GM12878 (cell line): ENCODE measurements at regions of chr16 and their contacts with region 1.

Region 1: GRCh38 chr16:87778830-87779579 is 13.2 kb upstream of the KLHDC4 start:
- DNase-seq: peak; percentile 80
- ATAC-seq: peak; percentile 77
- H3K4me3 ChIP-seq: no peak overlapping the region; the same call in 1 of the 2 replicates
- H3K27ac ChIP-seq: peak overlapping the region; percentile 72
- H3K4me1 ChIP-seq: peaks cover 56% of the 10 kb centered on the region
- H3K27me3 ChIP-seq: no peaks in the 10 kb centered on the region
- CTCF ChIP-seq: peak; percentile 92 to 98 (median 98); a peak in 5 of 6 replicates
- EP300 ChIP-seq: peak; percentile 52 to 53; a peak in 2 of 4 replicates
- POLR2A ChIP-seq: peak; percentile 73
- RAD21 ChIP-seq: peak; percentile 100

Region 2: DNA sequence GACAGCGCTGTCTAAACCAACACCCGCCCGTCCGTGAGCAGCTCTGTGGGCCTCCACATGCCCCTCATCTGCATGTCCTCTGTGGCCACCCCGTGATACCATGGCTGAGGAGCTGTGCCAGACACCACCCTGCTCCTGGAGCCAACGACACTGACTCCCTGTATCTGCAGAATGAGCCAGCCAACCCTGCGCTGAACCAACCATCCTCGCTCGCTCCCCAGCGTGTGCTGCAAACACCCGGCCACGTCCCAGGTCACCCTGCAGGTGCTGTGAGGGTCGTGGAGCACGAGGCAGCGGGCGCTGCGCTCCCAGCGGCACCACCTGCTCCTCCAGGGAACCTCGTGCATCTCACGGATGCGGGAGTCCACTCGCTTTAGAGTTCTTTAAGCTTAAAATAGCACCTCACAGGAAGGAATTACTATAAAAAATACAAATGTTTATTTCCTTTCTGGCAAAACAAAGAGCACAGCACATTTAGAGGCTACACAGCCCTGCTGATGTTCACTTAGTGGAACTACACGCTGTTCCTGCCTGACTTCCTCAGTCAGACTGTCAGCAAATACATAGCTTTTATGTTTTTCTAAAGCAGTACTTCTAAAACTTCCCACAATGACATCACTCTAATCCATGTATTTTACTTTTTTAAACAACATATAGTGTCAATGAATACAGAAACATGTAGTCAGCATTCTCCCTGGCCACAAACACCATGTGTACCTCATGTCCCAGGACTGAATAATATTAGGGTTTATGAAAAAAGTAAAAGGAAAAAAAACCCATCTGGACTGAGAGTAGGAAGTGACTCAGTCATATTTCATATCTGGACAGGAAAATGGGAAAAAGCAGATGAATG is 343.4 kb before region 1 on chr16:
- CTCF ChIA-PET with region 1: no interaction called
- POLR2A ChIA-PET with region 1: no interaction called
- RAD21 ChIA-PET with region 1: no interaction called
- SMC1A ChIA-PET with region 1: no interaction called
- in situ Hi-C with region 1: no loop called
- intact Hi-C with region 1: no loop called
- DNase-seq: no peak
- ATAC-seq: no peak
- H3K4me3 ChIP-seq: no peak overlapping the region
- H3K27ac ChIP-seq: no peak overlapping the region
- H3K4me1 ChIP-seq: no peaks in the 10 kb centered on the region
- H3K27me3 ChIP-seq: peaks cover 0 to 4% of the 10 kb centered on the region in 2 experiments; a peak in 3 of 4 replicates
- CTCF ChIP-seq: no peak
- EP300 ChIP-seq: no peak
- POLR2A ChIP-seq: no peak
- RAD21 ChIP-seq: no peak

Region 3: DNA sequence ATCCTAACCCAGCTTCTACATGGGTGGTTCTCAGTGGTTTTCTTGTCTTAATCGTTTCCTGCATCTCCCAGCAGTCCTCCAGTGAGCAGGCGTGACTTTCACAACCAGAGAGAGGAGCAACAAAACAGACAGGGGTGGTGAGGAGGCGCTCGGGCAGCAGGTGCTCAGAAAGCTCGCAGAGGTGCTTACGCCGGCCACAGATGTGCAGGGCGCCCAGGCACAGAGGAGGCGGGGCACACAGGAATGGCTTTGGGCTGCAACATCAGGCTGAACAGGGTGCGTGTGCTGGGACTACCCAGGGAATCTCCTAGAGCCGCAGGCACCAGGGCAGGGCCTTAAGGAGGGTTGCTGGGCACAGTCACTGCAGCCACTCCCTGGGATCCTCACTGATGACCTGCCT is 45.8 kb before region 1 on chr16:
- CTCF ChIA-PET with region 1: no interaction called
- POLR2A ChIA-PET with region 1: no interaction called
- RAD21 ChIA-PET with region 1: no interaction called
- SMC1A ChIA-PET with region 1: no interaction called
- in situ Hi-C with region 1: no loop called
- intact Hi-C with region 1: no loop called
- DNase-seq: no peak
- ATAC-seq: no peak
- H3K4me3 ChIP-seq: no peak overlapping the region
- H3K27ac ChIP-seq: no peak overlapping the region
- H3K4me1 ChIP-seq: no peaks in the 10 kb centered on the region
- H3K27me3 ChIP-seq: no peaks in the 10 kb centered on the region
- CTCF ChIP-seq: no peak
- EP300 ChIP-seq: no peak
- POLR2A ChIP-seq: no peak
- RAD21 ChIP-seq: no peak

Region 4: DNA sequence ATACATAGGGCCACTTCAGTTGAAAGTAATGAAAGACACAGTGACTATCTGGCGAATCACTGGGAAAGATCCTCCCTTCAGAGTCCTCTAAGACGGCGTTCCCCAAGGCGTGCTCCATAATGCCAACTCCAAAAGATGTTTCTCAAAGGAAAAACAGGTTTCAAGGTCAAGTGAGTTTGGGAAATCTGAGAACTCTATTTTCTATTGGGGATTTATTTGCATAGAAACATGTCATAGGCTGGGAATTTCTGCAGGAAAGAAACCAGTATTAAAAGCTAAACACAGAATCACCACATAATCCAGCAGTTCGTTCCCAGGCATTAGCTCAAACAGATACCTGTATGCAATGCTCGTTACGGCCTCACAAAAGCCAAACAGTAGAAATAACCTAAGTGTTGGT is 21.1 kb before region 1 on chr16:
- CTCF ChIA-PET with region 1: no interaction called
- POLR2A ChIA-PET with region 1: no interaction called
- RAD21 ChIA-PET with region 1: no interaction called
- SMC1A ChIA-PET with region 1: no interaction called
- in situ Hi-C with region 1: no loop called
- intact Hi-C with region 1: no loop called
- DNase-seq: no peak
- ATAC-seq: no peak
- H3K4me3 ChIP-seq: no peak overlapping the region
- H3K27ac ChIP-seq: no peak overlapping the region
- H3K4me1 ChIP-seq: no peaks in the 10 kb centered on the region
- H3K27me3 ChIP-seq: no peaks in the 10 kb centered on the region
- CTCF ChIP-seq: no peak
- EP300 ChIP-seq: no peak
- POLR2A ChIP-seq: no peak
- RAD21 ChIP-seq: no peak

Region 5: DNA sequence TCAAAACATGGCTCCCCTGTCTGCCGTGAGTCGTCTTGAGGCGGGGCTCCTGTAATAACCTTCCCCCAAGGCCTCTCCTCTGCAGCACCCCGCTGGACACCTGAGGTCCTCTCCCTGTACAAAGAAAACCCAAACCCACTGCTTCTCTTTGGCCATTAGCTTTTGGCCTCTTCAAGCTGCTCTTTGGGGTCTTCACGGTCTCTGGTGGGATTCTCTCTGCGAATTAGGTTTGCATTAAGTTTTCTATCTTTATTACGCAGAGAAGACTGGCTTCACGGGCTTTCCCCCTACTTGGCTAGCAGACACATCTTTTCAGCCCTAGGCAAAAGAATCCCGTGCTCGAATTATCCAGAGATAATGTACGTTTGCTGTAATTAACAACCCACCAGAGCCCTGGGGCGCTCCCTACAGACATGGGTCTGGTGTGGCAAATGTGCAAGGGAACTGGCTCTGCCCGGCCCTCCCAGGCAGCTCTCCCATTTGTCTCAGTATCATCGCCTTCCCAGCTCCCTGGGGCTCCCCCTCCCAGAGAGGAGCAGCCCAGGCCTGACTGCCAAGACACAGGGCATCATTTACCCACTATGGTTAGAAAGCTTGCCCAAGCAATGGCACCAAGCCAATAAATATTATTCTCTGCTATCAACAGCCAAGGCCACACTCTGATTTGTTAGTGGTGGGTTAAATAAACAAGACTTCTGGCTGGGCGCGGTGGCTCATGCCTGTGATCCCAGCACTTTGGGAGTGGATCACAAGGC is 11.4 kb after region 1 on chr16:
- CTCF ChIA-PET with region 1: interaction called, 5 read pairs
- POLR2A ChIA-PET with region 1: interaction called, 3 read pairs
- RAD21 ChIA-PET with region 1: interaction called, 7 read pairs
- SMC1A ChIA-PET with region 1: interaction called, 11 read pairs
- in situ Hi-C with region 1: no loop called
- intact Hi-C with region 1: no loop called
- DNase-seq: no peak
- ATAC-seq: no peak
- H3K4me3 ChIP-seq: no peak overlapping the region
- H3K27ac ChIP-seq: no peak overlapping the region
- H3K4me1 ChIP-seq: no peaks in the 10 kb centered on the region
- H3K27me3 ChIP-seq: no peaks in the 10 kb centered on the region
- CTCF ChIP-seq: no peak
- EP300 ChIP-seq: no peak
- POLR2A ChIP-seq: no peak
- RAD21 ChIP-seq: no peak

Region 6: GRCh38 chr16:87847785-87848675 is 69.0 kb after region 1 on chr16:
- CTCF ChIA-PET with region 1: interaction called, 83 read pairs
- POLR2A ChIA-PET with region 1: interaction called, 7 read pairs
- RAD21 ChIA-PET with region 1: interaction called, 55 read pairs
- SMC1A ChIA-PET with region 1: interaction called, 63 read pairs
- in situ Hi-C with region 1: loop called (anchors 5 kb)
- intact Hi-C with region 1: loop called (anchors 5 kb)
- DNase-seq: no peak
- ATAC-seq: no peak
- H3K4me3 ChIP-seq: no peak overlapping the region
- H3K27ac ChIP-seq: no peak overlapping the region
- H3K4me1 ChIP-seq: peaks cover 9% of the 10 kb centered on the region
- H3K27me3 ChIP-seq: no peaks in the 10 kb centered on the region
- CTCF ChIP-seq: no peak
- EP300 ChIP-seq: no peak
- POLR2A ChIP-seq: peak; percentile 48; the same call in 1 of the 2 replicates
- RAD21 ChIP-seq: no peak

Region 7: DNA sequence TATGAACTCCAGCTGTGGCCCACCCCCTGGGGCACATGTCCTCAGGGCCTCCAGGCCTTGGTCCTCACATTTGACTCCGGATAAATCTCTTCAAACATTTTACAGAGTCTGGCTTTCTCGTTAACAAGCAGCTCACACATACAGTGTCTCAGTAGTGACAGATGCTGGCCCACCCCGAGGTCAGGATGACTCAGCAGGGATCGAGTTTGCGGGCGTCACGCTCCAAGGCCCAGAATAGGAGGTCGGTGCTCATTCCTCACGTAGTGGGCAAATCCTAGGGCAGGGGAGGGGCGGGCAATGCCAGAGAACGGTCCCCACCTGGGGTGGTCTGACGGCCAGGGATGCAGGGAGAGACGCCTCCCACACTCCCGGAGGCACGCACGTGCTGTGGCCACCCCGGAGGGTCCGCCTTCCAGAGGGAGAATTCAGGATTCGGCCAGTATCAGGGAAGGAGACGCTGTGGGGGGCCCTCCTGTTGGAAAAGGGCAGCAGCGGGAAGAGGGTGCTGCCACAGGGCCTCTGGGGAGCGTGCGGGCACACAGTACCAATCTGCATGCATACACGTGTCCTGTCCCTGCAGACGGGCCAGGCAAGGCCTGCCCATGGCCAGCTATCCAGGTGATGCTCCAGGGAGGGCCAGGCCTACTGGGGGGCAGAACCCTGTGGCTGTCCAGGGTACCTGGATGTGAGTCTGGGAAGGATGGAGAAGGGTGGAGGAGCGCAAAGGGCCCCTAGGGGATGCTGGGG is 81.7 kb after region 1 on chr16:
- CTCF ChIA-PET with region 1: interaction called, 553 read pairs
- POLR2A ChIA-PET with region 1: interaction called, 48 read pairs
- RAD21 ChIA-PET with region 1: interaction called, 406 read pairs
- SMC1A ChIA-PET with region 1: interaction called, 301 read pairs
- in situ Hi-C with region 1: no loop called
- intact Hi-C with region 1: no loop called
- DNase-seq: no peak
- ATAC-seq: peak; percentile 60
- H3K4me3 ChIP-seq: 0 out of 2 replicates have a peak overlapping the region, but pooled peaks have one; percentile 39
- H3K27ac ChIP-seq: peak overlapping the region; percentile 25
- H3K4me1 ChIP-seq: peaks cover 47% of the 10 kb centered on the region
- H3K27me3 ChIP-seq: no peaks in the 10 kb centered on the region
- CTCF ChIP-seq: no peak
- EP300 ChIP-seq: no peak
- POLR2A ChIP-seq: no peak
- RAD21 ChIP-seq: no peak

Region 8: DNA sequence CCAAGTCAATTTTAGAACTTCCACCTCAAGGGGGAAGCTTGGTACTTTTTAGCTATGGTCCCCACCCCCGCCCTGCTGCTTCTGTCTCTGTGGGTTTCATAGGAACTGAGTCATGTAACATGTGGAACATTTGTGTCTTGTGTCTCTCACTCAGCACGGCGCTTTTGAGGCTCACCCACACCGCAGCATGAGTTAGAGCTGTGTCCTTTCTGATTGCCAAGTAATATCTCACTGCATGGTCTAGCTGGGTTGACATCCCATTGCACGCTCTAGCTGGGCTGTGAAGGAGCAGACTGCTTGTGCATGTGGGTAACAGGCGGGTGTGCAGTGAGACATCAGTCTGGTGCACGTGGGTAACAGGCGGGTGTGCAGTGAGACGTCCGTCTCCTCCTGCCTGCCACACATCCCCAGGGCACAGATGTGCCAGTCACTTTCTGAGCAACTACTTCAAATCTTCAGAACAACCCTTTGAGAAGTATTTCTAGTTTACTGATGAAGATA is 116.7 kb after region 1 on chr16:
- CTCF ChIA-PET with region 1: interaction called, 23 read pairs
- POLR2A ChIA-PET with region 1: interaction called, 4 read pairs
- RAD21 ChIA-PET with region 1: interaction called, 18 read pairs
- SMC1A ChIA-PET with region 1: interaction called, 7 read pairs
- in situ Hi-C with region 1: no loop called
- intact Hi-C with region 1: no loop called
- DNase-seq: peak; percentile 67
- ATAC-seq: peak; percentile 94
- H3K4me3 ChIP-seq: no peak overlapping the region
- H3K27ac ChIP-seq: peak overlapping the region; percentile 31; the same call in 1 of the 2 replicates
- H3K4me1 ChIP-seq: peaks cover 24% of the 10 kb centered on the region
- H3K27me3 ChIP-seq: no peaks in the 10 kb centered on the region
- CTCF ChIP-seq: no peak
- EP300 ChIP-seq: peak in 1 of 2 experiments; percentile 57; a peak in 1 of 4 replicates
- POLR2A ChIP-seq: peak; percentile 20; the same call in 1 of the 2 replicates
- RAD21 ChIP-seq: no peak

Region 9: GRCh38 chr16:87924422-87925298 is 145.7 kb after region 1 on chr16:
- CTCF ChIA-PET with region 1: interaction called, 17 read pairs
- POLR2A ChIA-PET with region 1: interaction called, 4 read pairs
- RAD21 ChIA-PET with region 1: interaction called, 5 read pairs
- SMC1A ChIA-PET with region 1: interaction called, 3 read pairs
- in situ Hi-C with region 1: no loop called
- intact Hi-C with region 1: no loop called
- DNase-seq: peak; percentile 16
- ATAC-seq: peak; percentile 84
- H3K4me3 ChIP-seq: no peak overlapping the region
- H3K27ac ChIP-seq: no peak overlapping the region
- H3K4me1 ChIP-seq: peaks cover 33% of the 10 kb centered on the region
- H3K27me3 ChIP-seq: no peaks in the 10 kb centered on the region; a peak in 1 of 4 replicates
- CTCF ChIP-seq: no peak
- EP300 ChIP-seq: no peak
- POLR2A ChIP-seq: peak; percentile 55; the same call in 1 of the 2 replicates
- RAD21 ChIP-seq: no peak

Region 10: DNA sequence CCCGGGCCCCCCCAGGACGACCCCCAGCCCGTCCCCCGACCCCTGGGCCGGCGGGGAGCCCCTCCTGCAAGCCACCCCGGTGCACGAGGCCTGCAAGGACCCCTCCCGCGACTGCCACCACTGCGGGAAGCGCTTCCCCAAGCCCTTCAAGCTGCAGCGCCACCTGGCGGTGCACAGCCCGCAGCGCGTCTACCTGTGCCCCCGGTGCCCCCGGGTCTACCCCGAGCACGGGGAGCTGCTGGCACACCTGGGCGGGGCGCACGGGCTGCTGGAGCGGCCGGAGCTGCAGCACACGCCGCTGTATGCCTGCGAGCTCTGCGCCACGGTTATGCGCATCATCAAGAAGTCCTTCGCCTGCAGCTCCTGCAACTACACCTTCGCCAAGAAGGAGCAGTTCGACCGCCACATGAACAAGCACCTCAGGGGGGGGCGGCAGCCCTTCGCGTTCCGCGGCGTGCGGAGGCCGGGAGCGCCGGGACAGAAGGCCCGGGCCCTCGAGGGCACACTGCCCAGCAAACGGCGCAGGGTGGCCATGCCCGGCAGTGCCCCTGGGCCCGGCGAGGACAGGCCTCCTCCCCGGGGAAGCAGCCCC is 658.5 kb after region 1 on chr16:
- CTCF ChIA-PET with region 1: no interaction called
- POLR2A ChIA-PET with region 1: no interaction called
- RAD21 ChIA-PET with region 1: interaction called, 3 read pairs
- SMC1A ChIA-PET with region 1: interaction called, 3 read pairs
- in situ Hi-C with region 1: no loop called
- intact Hi-C with region 1: loop called (anchors 10 kb)
- DNase-seq: no peak
- ATAC-seq: peak; percentile 86
- H3K4me3 ChIP-seq: no peak overlapping the region
- H3K27ac ChIP-seq: no peak overlapping the region
- H3K4me1 ChIP-seq: no peaks in the 10 kb centered on the region
- H3K27me3 ChIP-seq: no peaks in the 10 kb centered on the region
- CTCF ChIP-seq: peak; percentile 71 to 87 (median 78)
- EP300 ChIP-seq: no peak
- POLR2A ChIP-seq: no peak
- RAD21 ChIP-seq: peak; percentile 73